Activated CD4-positive, alpha-beta memory T cell treated with anti-CD3 and anti-CD28 coated beads for 36 hours (primary cell): ENCODE measurements at regions of chr9 and their contacts with region 1.

Region 1: GRCh38 chr9:83937911-83938323 is 16.7 kb upstream of the KIF27 start:
- DNase-seq: peak; percentile 20
- H3K4me3 Mint-ChIP-seq: no peak overlapping the region
- H3K27ac Mint-ChIP-seq: no peak overlapping the region
- H3K4me1 Mint-ChIP-seq: no peaks in the 10 kb centered on the region
- H3K27me3 Mint-ChIP-seq: no peaks in the 10 kb centered on the region

Region 2: DNA sequence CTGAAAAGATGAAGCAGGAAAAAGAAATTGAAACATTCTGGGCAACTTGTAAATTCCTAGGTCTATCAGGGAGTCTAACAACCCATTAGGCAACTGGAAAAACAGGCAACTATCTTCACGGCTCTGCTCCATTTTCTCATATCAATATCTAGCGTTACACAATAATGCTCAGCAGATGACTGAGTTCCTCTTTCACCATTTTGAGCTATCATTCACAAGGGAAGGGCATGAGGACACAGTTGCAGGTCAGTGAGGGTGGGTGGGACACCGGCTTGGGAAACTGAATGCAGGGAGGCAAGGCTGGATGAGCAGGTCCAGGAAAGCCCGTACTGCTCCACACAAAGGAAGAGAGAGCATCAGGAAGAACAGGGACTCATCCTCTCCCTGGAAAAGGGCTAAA is 466.7 kb before region 1 on chr9:
- CTCF ChIA-PET with region 1: no interaction called
- POLR2A ChIA-PET with region 1: no interaction called
- intact Hi-C with region 1: no loop called
- DNase-seq: no peak
- H3K4me3 Mint-ChIP-seq: no peak overlapping the region
- H3K27ac Mint-ChIP-seq: no peak overlapping the region
- H3K4me1 Mint-ChIP-seq: peaks cover 25% of the 10 kb centered on the region
- H3K27me3 Mint-ChIP-seq: peaks cover 1% of the 10 kb centered on the region

Region 3: GRCh38 chr9:84002344-84002743 is 64.4 kb after region 1 on chr9:
- CTCF ChIA-PET with region 1: no interaction called
- POLR2A ChIA-PET with region 1: no interaction called
- intact Hi-C with region 1: no loop called
- DNase-seq: no peak
- H3K4me3 Mint-ChIP-seq: no peak overlapping the region
- H3K27ac Mint-ChIP-seq: no peak overlapping the region
- H3K4me1 Mint-ChIP-seq: peaks cover 12% of the 10 kb centered on the region
- H3K27me3 Mint-ChIP-seq: no peaks in the 10 kb centered on the region

Region 4: DNA sequence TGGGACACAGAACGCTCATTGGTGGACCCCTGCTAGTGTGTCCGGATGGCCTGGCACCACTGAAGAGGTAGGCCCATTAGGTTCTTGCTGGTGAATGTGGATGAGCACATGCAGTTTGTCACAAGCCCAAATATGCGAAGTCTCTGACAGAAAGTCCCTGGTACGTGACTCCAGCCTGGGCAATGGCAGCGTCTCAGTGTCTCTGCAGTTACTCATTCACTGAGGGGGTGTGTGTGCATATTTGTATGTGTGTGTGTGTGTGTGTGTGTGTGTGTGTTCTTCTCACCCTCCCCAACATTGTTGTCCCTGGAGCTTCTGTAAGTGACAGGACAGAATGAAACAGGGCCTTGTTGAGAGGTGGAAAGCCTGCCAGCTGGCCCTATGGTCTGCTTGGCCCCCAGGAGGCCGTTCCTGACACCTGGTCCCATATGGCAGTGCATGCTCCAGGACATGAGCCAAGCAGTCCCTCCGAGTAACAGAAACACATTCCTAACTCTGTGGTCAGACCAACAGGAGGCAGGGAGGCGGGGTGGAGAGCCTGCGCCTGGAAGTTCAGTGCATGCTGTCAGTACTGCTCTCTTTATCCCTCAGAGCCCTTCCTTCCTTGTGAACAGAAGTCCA is 232.7 kb after region 1 on chr9:
- CTCF ChIA-PET with region 1: interaction called, 10 read pairs
- POLR2A ChIA-PET with region 1: interaction called, 3 read pairs
- intact Hi-C with region 1: loop called (anchors 1 kb)
- DNase-seq: no peak
- H3K4me3 Mint-ChIP-seq: no peak overlapping the region
- H3K27ac Mint-ChIP-seq: no peak overlapping the region
- H3K4me1 Mint-ChIP-seq: no peaks in the 10 kb centered on the region
- H3K27me3 Mint-ChIP-seq: no peaks in the 10 kb centered on the region

Region 5: GRCh38 chr9:84315278-84315877 is 377.5 kb after region 1 on chr9:
- CTCF ChIA-PET with region 1: interaction called, 7 read pairs
- POLR2A ChIA-PET with region 1: no interaction called
- intact Hi-C with region 1: loop called (anchors 1 kb)
- DNase-seq: peak; percentile 70
- H3K4me3 Mint-ChIP-seq: no peak overlapping the region
- H3K27ac Mint-ChIP-seq: no peak overlapping the region
- H3K4me1 Mint-ChIP-seq: peaks cover 6% of the 10 kb centered on the region
- H3K27me3 Mint-ChIP-seq: no peaks in the 10 kb centered on the region